ENCODE measurements at regions of chr2 and their contacts with region 1.

Region 1: GRCh38 chr2:65357095-65357958 is 75.1 kb downstream of the SPRED2 start:
- DNase-seq: no peak
- H3K4me3 Mint-ChIP-seq: no peak overlapping the region
- H3K27ac Mint-ChIP-seq: no peak overlapping the region
- H3K4me1 Mint-ChIP-seq: peaks cover 59% of the 10 kb centered on the region
- H3K27me3 Mint-ChIP-seq: peaks cover 16% of the 10 kb centered on the region

Region 2: GRCh38 chr2:65320042-65320725 is 37.1 kb before region 1 on chr2:
- intact Hi-C with region 1: loop called (anchors 1 kb)
- DNase-seq: no peak
- H3K4me3 Mint-ChIP-seq: no peak overlapping the region
- H3K27ac Mint-ChIP-seq: peak overlapping the region; percentile 64
- H3K4me1 Mint-ChIP-seq: peaks cover 21% of the 10 kb centered on the region
- H3K27me3 Mint-ChIP-seq: peaks cover 2% of the 10 kb centered on the region

Region 3: GRCh38 chr2:65880436-65881163 is 523.3 kb after region 1 on chr2:
- intact Hi-C with region 1: no loop called
- DNase-seq: no peak
- H3K4me3 Mint-ChIP-seq: no peak overlapping the region
- H3K27ac Mint-ChIP-seq: no peak overlapping the region
- H3K4me1 Mint-ChIP-seq: no peaks in the 10 kb centered on the region
- H3K27me3 Mint-ChIP-seq: no peaks in the 10 kb centered on the region

Measured in activated T-helper 2 cell treated with anti-CD3 and anti-CD28 coated beads, Interferon-gamma antibody, Interleukin-2, Interleukin-4, amounts not matched to agents 10 μg/mL and 5 μg/mL and 100 μg/mL, durations not matched to agents 14 hours and 24 hours and 36 hours (primary cell).